IMR-90 (cell line): ENCODE measurements at regions of chr5 and their contacts with region 1.

Region 1: GRCh38 chr5:43646992-43647391 is 44.0 kb downstream of the NNT start:
- DNase-seq: peak; percentile 57
- ATAC-seq: peak; percentile 47
- H3K4me3 ChIP-seq: no peak overlapping the region
- H3K27ac ChIP-seq: no peak overlapping the region
- H3K4me1 ChIP-seq: peaks cover 14% of the 10 kb centered on the region
- H3K27me3 ChIP-seq: no peaks in the 10 kb centered on the region
- CTCF ChIP-seq: peak; percentile 17; the same call in 1 of the 2 replicates
- POLR2A ChIP-seq: no peak
- RAD21 ChIP-seq: no peak

Region 2: GRCh38 chr5:43661102-43661501 is 14.1 kb after region 1 on chr5:
- CTCF ChIA-PET with region 1: no interaction called
- POLR2A ChIA-PET with region 1: no interaction called
- dilution Hi-C with region 1: no loop called
- in situ Hi-C with region 1: no loop called
- intact Hi-C with region 1: loop called (anchors 1 kb)
- DNase-seq: peak; percentile 59
- ATAC-seq: no peak
- H3K4me3 ChIP-seq: no peak overlapping the region
- H3K27ac ChIP-seq: no peak overlapping the region
- H3K4me1 ChIP-seq: peaks cover 2% of the 10 kb centered on the region; the same call in 1 of the 2 replicates
- H3K27me3 ChIP-seq: no peaks in the 10 kb centered on the region
- CTCF ChIP-seq: peak; percentile 58
- POLR2A ChIP-seq: no peak
- RAD21 ChIP-seq: peak; percentile 52

Region 3: GRCh38 chr5:43874772-43875171 is 227.8 kb after region 1 on chr5:
- CTCF ChIA-PET with region 1: no interaction called
- POLR2A ChIA-PET with region 1: no interaction called
- dilution Hi-C with region 1: no loop called
- in situ Hi-C with region 1: no loop called
- intact Hi-C with region 1: no loop called
- DNase-seq: peak; percentile 52
- ATAC-seq: peak; percentile 95
- H3K4me3 ChIP-seq: no peak overlapping the region
- H3K27ac ChIP-seq: no peak overlapping the region
- H3K4me1 ChIP-seq: peaks cover 2% of the 10 kb centered on the region; the same call in 1 of the 2 replicates
- H3K27me3 ChIP-seq: no peaks in the 10 kb centered on the region
- CTCF ChIP-seq: no peak
- POLR2A ChIP-seq: no peak
- RAD21 ChIP-seq: no peak